Right ventricle myocardium superior (tissue), 1 donor: ENCODE measurements at regions of chr5 and their contacts with region 1.

Region 1: DNA sequence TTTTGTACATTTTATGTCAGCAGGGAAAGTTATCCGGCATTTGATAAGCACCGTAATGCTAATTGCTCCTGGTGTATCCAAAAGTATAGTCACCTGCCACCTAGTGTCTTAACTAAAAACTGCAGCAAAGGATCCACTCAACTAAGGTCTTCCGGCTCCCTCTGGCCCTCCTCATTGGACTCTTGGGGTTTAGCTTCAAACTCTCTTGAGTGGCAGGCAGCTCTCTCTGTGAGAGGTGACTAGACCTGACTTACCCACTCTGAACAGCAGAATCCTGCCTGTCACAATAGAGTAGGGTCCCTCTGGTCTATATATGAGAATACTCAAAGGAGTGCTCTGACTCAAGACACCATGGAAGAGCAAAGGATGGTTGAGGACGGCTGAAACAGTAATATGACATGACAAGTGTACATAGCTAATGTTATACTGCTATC is 60.3 kb upstream of the CAST start:
- DNase-seq: no peak
- ATAC-seq: peak; percentile 91

Region 2: DNA sequence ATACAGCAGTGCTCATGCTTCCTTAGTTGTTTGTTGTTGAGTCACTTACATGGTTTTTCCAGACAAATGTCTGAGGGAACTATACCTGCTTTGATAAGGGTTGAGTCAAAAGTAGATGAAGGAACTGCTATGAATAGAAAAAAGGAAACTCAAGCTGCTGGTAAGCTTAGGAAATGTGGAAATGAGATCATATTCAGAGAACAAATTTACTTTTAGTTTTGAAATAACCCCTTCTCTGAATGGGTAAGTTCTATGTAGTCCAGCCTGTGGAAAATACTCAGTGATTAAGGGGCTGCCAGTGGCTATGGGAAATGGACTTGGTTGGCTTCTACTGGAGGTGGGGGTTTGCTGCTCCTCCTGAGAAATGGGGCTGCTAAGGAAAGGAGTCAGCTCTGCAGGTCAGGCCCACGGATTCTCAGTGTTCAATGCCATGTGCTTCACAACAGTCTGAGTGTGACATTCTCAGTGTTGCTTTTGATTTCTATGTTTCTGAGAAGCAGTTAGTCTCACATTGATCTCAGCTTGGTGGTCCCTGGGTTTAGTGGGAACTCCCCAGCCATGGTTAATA is 731.6 kb before region 1 on chr5:
- intact Hi-C with region 1: loop called (anchors 10 kb)
- DNase-seq: no peak
- ATAC-seq: no peak

Region 3: GRCh38 chr5:96344678-96345577 is 256.9 kb before region 1 on chr5:
- intact Hi-C with region 1: loop called (anchors 5 kb)
- DNase-seq: no peak
- ATAC-seq: peak; percentile 92

Region 4: GRCh38 chr5:96509721-96510333 is 92.0 kb before region 1 on chr5:
- intact Hi-C with region 1: no loop called
- DNase-seq: no peak
- ATAC-seq: no peak

Region 5: DNA sequence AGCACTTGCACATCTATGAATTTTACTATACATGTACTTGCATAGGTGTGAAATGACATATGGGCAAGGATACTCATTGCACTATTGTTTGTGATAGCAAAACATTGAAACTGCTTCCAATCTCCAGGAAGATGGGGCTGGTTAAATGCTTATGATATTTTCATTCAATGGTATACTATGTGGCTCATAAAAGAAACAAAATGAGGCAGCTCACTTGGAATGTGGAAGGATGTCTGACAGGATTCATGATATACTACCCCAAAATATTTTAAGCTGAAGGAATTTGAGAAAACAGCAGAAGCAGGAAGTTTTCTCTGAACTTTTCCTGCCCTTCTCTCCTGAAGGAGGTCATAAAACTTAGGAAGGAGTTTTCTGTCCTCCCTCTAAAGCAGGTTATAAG is 39.2 kb before region 1 on chr5:
- intact Hi-C with region 1: no loop called
- DNase-seq: no peak
- ATAC-seq: no peak

Region 6: DNA sequence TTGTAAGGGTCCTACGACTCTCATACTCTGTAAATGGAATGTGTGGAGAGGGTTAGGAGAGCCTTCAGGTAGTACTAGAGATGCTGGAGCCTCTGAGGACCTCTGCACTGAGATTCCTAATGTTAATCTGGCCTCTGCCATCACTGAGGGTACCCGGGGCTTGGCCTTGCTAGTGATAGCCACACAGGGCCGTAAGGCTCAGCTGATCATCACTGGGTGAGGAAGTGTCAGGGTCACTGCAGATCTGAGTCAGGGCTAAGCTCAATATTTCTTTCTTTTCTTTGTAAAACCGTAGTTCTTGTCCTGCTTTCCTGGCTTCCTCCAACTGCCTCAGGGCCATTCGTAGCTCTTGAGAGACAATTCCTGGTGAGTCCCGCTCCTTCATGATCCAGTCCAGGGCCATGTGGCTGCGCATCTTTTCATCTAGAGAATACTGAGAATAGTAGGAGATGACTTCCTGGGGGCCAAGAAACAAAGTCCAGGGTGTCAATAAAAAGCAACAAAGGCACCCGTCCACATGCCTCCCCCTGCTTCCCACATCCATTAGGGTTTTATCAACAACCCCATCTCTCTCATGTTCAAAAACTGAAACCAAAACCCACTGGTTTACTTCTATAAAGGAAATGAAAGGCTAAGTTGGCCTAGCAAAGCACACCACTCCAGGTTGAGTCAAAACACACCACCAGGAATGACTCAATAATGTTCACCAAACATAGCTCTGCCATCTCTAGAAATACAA is 492.9 kb after region 1 on chr5:
- intact Hi-C with region 1: no loop called
- DNase-seq: no peak
- ATAC-seq: no peak